Panc1 (cell line): ENCODE measurements at regions of chr5 and their contacts with region 1.

Region 1: GRCh38 chr5:133539818-133540217 is 72.5 kb downstream of the FSTL4 start:
- DNase-seq: no peak
- ATAC-seq: no peak
- H3K4me3 ChIP-seq: no peak overlapping the region
- H3K27ac ChIP-seq: no peak overlapping the region
- H3K4me1 ChIP-seq: no peaks in the 10 kb centered on the region
- H3K27me3 ChIP-seq: peaks cover 9% of the 10 kb centered on the region; the same call in 1 of the 2 replicates
- CTCF ChIP-seq: no peak

Region 2: GRCh38 chr5:133509742-133510079 is 30.1 kb before region 1 on chr5:
- CTCF ChIA-PET with region 1: no interaction called
- POLR2A ChIA-PET with region 1: interaction called, 12 read pairs
- in situ Hi-C with region 1: no loop called
- intact Hi-C with region 1: no loop called
- DNase-seq: no peak
- ATAC-seq: no peak
- H3K4me3 ChIP-seq: no peak overlapping the region
- H3K27ac ChIP-seq: no peak overlapping the region
- H3K4me1 ChIP-seq: no peaks in the 10 kb centered on the region
- H3K27me3 ChIP-seq: peaks cover 3% of the 10 kb centered on the region; the same call in 1 of the 2 replicates
- CTCF ChIP-seq: no peak

Region 3: GRCh38 chr5:133877351-133878235 is 337.8 kb after region 1 on chr5:
- CTCF ChIA-PET with region 1: no interaction called
- POLR2A ChIA-PET with region 1: interaction called, 19 read pairs
- in situ Hi-C with region 1: no loop called
- intact Hi-C with region 1: no loop called
- DNase-seq: no peak
- ATAC-seq: no peak
- H3K4me3 ChIP-seq: no peak overlapping the region
- H3K27ac ChIP-seq: no peak overlapping the region
- H3K4me1 ChIP-seq: peaks cover 4% of the 10 kb centered on the region; the same call in 1 of the 2 replicates
- H3K27me3 ChIP-seq: no peaks in the 10 kb centered on the region; the same call in 1 of the 2 replicates
- CTCF ChIP-seq: no peak

Region 4: DNA sequence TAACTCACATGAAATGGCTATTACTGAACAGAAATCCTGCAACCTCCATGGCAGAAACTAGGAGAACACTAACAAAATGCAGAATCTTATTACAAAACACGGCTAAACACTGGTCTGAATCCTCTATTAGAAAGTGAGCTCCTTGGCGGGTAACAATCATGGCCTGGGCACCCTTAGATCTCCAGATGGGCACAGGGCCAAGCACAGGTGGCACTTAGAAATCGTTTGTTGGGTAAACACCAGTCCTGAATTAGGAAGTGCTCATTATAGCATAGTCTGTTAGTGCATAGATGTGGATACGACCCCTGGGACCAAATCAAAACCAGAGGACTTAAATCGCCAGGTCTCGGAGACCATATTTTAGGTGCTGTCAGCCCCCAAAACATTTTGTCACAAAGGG is 450.6 kb after region 1 on chr5:
- CTCF ChIA-PET with region 1: no interaction called
- POLR2A ChIA-PET with region 1: interaction called, 11 read pairs
- in situ Hi-C with region 1: no loop called
- intact Hi-C with region 1: no loop called
- DNase-seq: no peak
- ATAC-seq: no peak
- H3K4me3 ChIP-seq: no peak overlapping the region
- H3K27ac ChIP-seq: no peak overlapping the region
- H3K4me1 ChIP-seq: peaks cover 36% of the 10 kb centered on the region
- H3K27me3 ChIP-seq: no peaks in the 10 kb centered on the region
- CTCF ChIP-seq: no peak